CD8-positive, alpha-beta memory T cell (primary cell): ENCODE measurements at regions of chr3 and their contacts with region 1.

Region 1: DNA sequence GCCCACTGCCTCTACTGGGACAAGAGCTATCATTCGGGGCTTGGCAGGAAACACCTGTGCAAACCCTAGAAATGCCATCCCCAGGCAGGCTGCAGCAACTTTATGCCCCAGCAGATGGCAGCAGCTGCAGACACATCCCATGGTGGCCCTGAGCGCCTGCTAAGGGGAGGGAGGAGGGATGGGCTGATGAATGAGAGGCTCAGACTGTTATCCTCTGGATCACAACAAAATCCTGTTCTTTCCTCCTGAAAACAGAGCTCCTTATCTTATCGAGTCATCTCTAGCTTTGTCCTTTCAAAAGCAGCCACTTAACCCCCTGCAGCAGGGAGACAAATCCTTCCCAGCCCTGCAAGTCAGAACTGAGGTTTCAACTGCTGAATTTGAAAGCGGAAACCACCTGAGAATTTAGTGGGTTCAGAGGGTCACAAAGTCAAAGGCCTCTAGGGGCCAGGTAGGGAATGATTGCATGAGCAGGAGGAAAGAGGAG is 90.6 kb upstream of the PROK2 start:
- DNase-seq: peak; percentile 52 to 78 (median 53)
- H3K4me3 ChIP-seq: no peak overlapping the region
- H3K4me3 Mint-ChIP-seq: no peak overlapping the region
- H3K27ac ChIP-seq: no peak overlapping the region
- H3K27ac Mint-ChIP-seq: peak overlapping the region in 1 of 8 donors; percentile 10
- H3K4me1 ChIP-seq: no peaks in the 10 kb centered on the region
- H3K4me1 Mint-ChIP-seq: peaks cover 14 to 24% (median 18%) of the 10 kb centered on the region in 3 donors
- H3K27me3 ChIP-seq: no peaks in the 10 kb centered on the region
- H3K27me3 Mint-ChIP-seq: peaks cover 4 to 22% of the 10 kb centered on the region in 2 donors

Region 2: DNA sequence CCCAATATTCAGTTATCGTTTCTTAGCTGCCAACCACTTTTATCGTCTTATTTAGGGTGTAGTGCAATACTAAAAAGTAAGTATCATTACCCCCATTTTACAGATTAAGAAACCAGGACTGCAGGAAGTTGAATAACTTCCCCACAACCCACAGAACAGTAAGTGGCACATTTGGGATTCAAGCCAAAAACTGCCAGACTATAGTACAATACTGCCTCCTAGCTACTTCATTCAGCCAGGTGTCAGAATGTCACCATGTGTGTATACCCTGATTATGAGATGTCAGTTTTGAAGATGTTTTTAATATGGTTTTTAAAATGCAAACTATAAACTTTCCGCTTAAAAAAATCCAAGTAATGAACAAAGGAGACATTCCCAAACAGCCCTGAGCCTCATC is 16.4 kb before region 1 on chr3:
- CTCF ChIA-PET with region 1: interaction called, 12 read pairs
- POLR2A ChIA-PET with region 1: no interaction called
- DNase-seq: peak in 3 of 5 donors; percentile 6 to 49 (median 27)
- H3K4me3 ChIP-seq: no peak overlapping the region
- H3K4me3 Mint-ChIP-seq: no peak overlapping the region
- H3K27ac ChIP-seq: no peak overlapping the region
- H3K27ac Mint-ChIP-seq: peak overlapping the region in 1 of 8 donors; percentile 21
- H3K4me1 ChIP-seq: no peaks in the 10 kb centered on the region
- H3K4me1 Mint-ChIP-seq: peaks cover 10 to 12% (median 11%) of the 10 kb centered on the region in 3 donors
- H3K27me3 ChIP-seq: no peaks in the 10 kb centered on the region
- H3K27me3 Mint-ChIP-seq: peaks cover 23 to 40% of the 10 kb centered on the region in 2 donors

Region 3: GRCh38 chr3:71891483-71891882 is 16.0 kb after region 1 on chr3:
- CTCF ChIA-PET with region 1: interaction called, 28 read pairs
- POLR2A ChIA-PET with region 1: no interaction called
- DNase-seq: no peak
- H3K4me3 ChIP-seq: no peak overlapping the region
- H3K4me3 Mint-ChIP-seq: no peak overlapping the region
- H3K27ac ChIP-seq: no peak overlapping the region
- H3K27ac Mint-ChIP-seq: no peak overlapping the region
- H3K4me1 ChIP-seq: no peaks in the 10 kb centered on the region
- H3K4me1 Mint-ChIP-seq: no peaks in the 10 kb centered on the region
- H3K27me3 ChIP-seq: no peaks in the 10 kb centered on the region
- H3K27me3 Mint-ChIP-seq: peaks cover 0 to 11% of the 10 kb centered on the region in 2 donors

Region 4: GRCh38 chr3:72818092-72818773 is 942.7 kb after region 1 on chr3:
- CTCF ChIA-PET with region 1: interaction called, 25 read pairs
- POLR2A ChIA-PET with region 1: no interaction called
- DNase-seq: no peak
- H3K4me3 ChIP-seq: no peak overlapping the region
- H3K4me3 Mint-ChIP-seq: no peak overlapping the region
- H3K27ac ChIP-seq: no peak overlapping the region
- H3K27ac Mint-ChIP-seq: peak overlapping the region in 2 of 8 donors; percentile 7 to 21
- H3K4me1 ChIP-seq: peaks cover 23% of the 10 kb centered on the region
- H3K4me1 Mint-ChIP-seq: peaks cover 0 to 4% (median 3%) of the 10 kb centered on the region in 3 donors
- H3K27me3 ChIP-seq: no peaks in the 10 kb centered on the region
- H3K27me3 Mint-ChIP-seq: no peaks in the 10 kb centered on the region